ENCODE measurements at regions of chrX and their contacts with region 1.

Region 1: GRCh38 chrX:153599192-153600031 is 473 bp upstream of the CCNQ start:
- DNase-seq: peak; percentile 90 to 94 (median 92)
- ATAC-seq: peak; percentile 98
- H3K4me3 ChIP-seq: peak overlapping the region in 1 of 2 donors; percentile 39
- H3K27ac ChIP-seq: peak overlapping the region in 3 of 4 donors; percentile 50 to 79 (median 75)
- H3K4me1 ChIP-seq: peaks cover 23% of the 10 kb centered on the region
- H3K27me3 ChIP-seq: no peaks in the 10 kb centered on the region
- CTCF ChIP-seq: peak in 1 of 7 experiments; percentile 14
- POLR2A ChIP-seq: peak in 2 of 3 donors; percentile 28 to 40

Region 2: DNA sequence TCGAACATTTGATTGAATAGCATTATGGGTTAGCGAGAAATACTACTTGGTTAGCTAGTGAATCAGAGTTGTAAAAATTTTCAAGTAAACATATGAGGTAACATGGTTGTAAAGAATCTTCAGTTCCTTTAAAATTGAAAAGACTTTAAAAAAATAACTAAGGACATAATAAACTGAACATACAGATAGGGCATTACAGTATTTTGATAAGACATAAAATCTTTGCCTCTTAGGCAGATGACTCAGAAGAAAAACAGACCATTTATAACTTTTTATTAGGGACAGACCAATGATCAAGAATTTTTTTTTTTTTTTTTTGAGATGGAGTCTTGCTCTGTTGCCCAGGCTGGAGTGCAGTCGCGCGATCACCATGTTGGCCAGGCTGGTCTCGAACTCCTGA is 648.6 kb before region 1 on chrX:
- intact Hi-C with region 1: loop called (anchors 5 kb)
- DNase-seq: no peak
- ATAC-seq: no peak
- H3K4me3 ChIP-seq: no peak overlapping the region
- H3K27ac ChIP-seq: no peak overlapping the region
- H3K4me1 ChIP-seq: no peaks in the 10 kb centered on the region
- H3K27me3 ChIP-seq: no peaks in the 10 kb centered on the region
- CTCF ChIP-seq: no peak
- POLR2A ChIP-seq: no peak